ENCODE measurements at regions of chr4 and their contacts with region 1.

Region 1: DNA sequence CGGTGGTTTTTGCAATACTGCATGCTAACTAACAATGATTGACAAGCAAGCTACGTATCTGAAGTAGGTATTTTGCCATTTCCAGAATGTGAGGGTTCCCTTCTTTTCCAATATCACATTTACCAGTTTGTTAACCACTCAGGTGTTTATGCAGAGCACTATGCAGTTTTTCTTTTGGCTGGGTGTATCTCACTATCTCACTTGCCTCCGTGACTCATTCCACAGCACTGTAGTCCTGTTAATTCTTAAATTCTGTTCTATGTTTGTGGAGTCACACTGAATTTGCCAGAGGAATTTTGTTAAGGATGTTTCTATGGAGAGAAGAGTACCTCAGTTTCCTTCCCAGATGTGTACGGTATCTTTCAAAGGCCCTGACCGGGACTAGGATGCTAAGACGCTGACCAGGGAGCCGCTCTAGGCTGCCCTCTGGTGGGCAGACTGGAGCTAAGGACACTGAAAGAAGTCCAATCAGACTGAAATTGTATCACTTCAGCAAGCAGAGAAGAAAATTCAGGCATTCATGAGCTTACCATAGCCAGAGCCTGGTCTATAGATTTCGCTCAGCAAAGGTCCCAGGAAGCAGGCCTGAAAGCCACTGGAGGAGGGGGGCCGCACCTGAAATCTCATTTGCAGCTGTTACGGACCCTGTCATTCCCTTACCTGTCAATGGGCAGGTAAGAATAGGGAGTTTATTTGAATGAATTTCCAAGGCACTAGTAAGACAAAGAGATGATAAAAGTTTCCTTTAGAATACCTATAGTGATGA is 388.4 kb upstream of the SPOCK3 start:
- DNase-seq: peak; percentile 69
- ATAC-seq: peak; percentile 67
- H3K4me3 ChIP-seq: no peak overlapping the region
- H3K27ac ChIP-seq: no peak overlapping the region
- H3K4me1 ChIP-seq: no peaks in the 10 kb centered on the region
- H3K27me3 ChIP-seq: no peaks in the 10 kb centered on the region
- CTCF ChIP-seq: peak; percentile 80

Region 2: DNA sequence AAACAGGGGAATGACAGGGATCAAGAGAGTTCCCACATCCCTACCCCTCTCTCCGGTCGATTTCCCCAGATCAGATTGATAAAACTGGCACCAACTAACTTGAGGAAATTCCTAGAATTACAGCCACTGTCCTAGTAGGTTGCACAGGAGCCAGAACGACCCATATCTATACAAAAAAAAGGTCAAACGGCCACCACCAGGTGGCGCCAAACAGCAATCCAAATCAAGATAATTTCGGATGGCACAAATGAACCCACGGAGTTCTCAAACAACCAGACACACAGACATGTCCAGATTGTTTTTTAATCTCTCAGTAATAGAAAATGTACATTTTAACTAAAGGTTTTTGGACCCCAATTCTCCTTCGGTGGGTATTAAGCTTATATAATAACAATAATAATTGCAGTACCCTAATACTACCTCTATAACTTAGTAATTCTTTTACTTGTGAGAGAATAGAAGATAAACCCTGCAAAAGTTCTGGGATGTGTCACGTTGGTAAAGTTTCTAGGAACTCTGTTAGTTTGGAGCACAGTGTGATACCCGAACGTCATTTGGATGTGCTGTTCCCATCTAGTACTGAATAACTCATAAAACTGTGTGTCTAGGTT is 601.0 kb before region 1 on chr4:
- CTCF ChIA-PET with region 1: no interaction called
- POLR2A ChIA-PET with region 1: no interaction called
- intact Hi-C with region 1: loop called (anchors 2 kb)
- DNase-seq: peak; percentile 74
- ATAC-seq: peak; percentile 63
- H3K4me3 ChIP-seq: no peak overlapping the region
- H3K27ac ChIP-seq: no peak overlapping the region
- H3K4me1 ChIP-seq: peaks cover 27% of the 10 kb centered on the region
- H3K27me3 ChIP-seq: no peaks in the 10 kb centered on the region
- CTCF ChIP-seq: peak; percentile 84

Region 3: GRCh38 chr4:167443841-167444240 is 178.8 kb before region 1 on chr4:
- CTCF ChIA-PET with region 1: no interaction called
- POLR2A ChIA-PET with region 1: no interaction called
- intact Hi-C with region 1: loop called (anchors 2 kb)
- DNase-seq: no peak
- ATAC-seq: no peak
- H3K4me3 ChIP-seq: no peak overlapping the region
- H3K27ac ChIP-seq: no peak overlapping the region
- H3K4me1 ChIP-seq: no peaks in the 10 kb centered on the region
- H3K27me3 ChIP-seq: no peaks in the 10 kb centered on the region
- CTCF ChIP-seq: no peak

Region 4: DNA sequence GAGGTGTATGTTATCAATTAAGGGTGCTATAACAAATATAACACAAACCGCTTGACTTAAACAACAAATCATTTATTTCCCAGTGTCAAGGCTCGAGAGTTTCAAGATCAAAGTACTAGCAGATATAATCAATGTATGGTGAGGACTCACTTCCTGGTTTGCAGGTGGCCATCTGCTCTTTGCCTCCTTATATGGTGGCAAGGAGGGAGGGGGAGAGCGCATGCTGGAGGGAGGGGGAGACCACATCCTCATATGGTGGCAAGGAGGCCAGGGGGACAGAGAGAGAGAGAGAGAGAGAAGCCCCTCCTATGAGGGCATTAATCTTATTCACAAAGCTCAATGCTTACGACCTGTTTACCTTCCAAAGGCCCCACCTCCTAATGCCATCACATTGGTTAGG is 16.1 kb before region 1 on chr4:
- CTCF ChIA-PET with region 1: no interaction called
- POLR2A ChIA-PET with region 1: no interaction called
- intact Hi-C with region 1: no loop called
- DNase-seq: no peak
- ATAC-seq: no peak
- H3K4me3 ChIP-seq: no peak overlapping the region
- H3K27ac ChIP-seq: no peak overlapping the region
- H3K4me1 ChIP-seq: no peaks in the 10 kb centered on the region
- H3K27me3 ChIP-seq: no peaks in the 10 kb centered on the region
- CTCF ChIP-seq: no peak

Region 5: DNA sequence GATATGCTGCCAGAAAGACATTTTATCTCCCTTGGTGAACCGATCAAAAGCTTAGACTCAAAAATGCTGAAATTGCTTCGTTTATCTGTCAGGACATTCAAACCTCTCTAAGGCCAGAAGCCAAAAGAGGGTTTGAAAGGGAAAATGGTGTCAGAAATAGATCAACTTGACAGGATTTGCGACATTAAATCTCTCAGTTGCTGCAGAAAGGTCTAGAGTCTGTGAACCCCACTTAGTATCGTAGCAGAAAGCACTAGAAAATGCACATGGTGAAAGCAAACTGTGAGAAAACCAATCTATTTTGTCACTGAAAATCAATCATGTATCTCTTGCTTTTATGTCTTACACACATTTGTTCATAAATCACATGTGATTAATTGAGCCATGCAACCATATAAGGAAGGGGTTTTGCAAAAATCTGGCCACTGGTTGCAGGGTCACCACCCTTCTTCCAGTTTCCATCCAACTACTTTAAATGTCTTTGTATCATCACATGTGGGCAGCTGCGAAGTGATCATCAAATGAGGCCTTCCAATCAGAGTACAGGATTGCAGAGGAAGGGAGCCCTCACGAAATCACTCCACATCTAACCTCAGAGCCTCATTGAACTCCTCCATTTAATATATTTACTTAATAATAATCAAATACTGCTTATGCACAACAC is 122.5 kb after region 1 on chr4:
- CTCF ChIA-PET with region 1: no interaction called
- POLR2A ChIA-PET with region 1: no interaction called
- intact Hi-C with region 1: no loop called
- DNase-seq: no peak
- ATAC-seq: no peak
- H3K4me3 ChIP-seq: no peak overlapping the region
- H3K27ac ChIP-seq: no peak overlapping the region
- H3K4me1 ChIP-seq: no peaks in the 10 kb centered on the region
- H3K27me3 ChIP-seq: no peaks in the 10 kb centered on the region
- CTCF ChIP-seq: no peak

Region 6: GRCh38 chr4:167989815-167990214 is 367.2 kb after region 1 on chr4:
- CTCF ChIA-PET with region 1: no interaction called
- POLR2A ChIA-PET with region 1: no interaction called
- intact Hi-C with region 1: loop called (anchors 10 kb)
- DNase-seq: peak; percentile 48
- ATAC-seq: peak; percentile 68
- H3K4me3 ChIP-seq: no peak overlapping the region
- H3K27ac ChIP-seq: no peak overlapping the region
- H3K4me1 ChIP-seq: no peaks in the 10 kb centered on the region
- H3K27me3 ChIP-seq: no peaks in the 10 kb centered on the region
- CTCF ChIP-seq: peak; percentile 54

Region 7: GRCh38 chr4:168076989-168077725 is 454.5 kb after region 1 on chr4:
- CTCF ChIA-PET with region 1: no interaction called
- POLR2A ChIA-PET with region 1: no interaction called
- intact Hi-C with region 1: loop called (anchors 5 kb)
- DNase-seq: peak; percentile 85
- ATAC-seq: peak; percentile 76
- H3K4me3 ChIP-seq: no peak overlapping the region
- H3K27ac ChIP-seq: peak overlapping the region; percentile 75
- H3K4me1 ChIP-seq: peaks cover 16% of the 10 kb centered on the region
- H3K27me3 ChIP-seq: no peaks in the 10 kb centered on the region
- CTCF ChIP-seq: peak; percentile 86

Region 8: DNA sequence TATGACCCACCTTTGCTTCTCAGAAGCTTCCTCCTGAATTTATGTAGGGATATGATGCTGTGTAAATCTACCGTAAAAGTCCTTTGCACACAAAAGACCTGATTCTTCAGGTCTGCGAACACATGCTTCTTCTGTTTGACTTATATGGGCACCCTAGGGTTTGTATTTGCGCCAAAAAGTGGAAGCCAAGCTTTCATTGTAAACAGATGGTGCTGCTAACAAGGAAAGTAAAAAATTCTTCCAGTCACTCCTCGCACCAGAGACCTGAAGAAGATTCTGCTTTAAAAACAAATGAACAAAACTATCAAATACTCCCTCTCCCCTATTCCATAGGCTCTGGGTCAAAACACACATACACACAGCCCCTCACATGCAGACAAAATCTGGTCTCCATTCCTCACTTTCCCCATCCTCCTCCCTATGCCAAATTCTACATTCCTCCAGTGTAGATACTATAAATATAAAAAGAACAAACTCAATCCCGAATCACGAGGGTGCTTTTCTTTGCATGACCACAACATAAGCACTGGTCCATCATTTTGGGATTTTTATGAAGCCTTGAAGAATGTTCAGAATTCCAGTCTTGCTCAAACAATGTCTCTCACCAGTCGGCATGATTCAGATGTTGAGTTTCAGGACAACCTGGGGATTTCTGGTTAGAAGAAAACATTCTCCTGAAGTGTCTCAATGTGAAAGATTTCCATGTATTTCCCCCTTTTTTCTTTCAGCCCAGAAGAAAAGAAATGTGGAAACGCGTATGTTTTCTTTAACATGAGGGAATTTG is 999.3 kb after region 1 on chr4:
- CTCF ChIA-PET with region 1: no interaction called
- POLR2A ChIA-PET with region 1: no interaction called
- intact Hi-C with region 1: no loop called
- DNase-seq: no peak
- ATAC-seq: no peak
- H3K4me3 ChIP-seq: no peak overlapping the region
- H3K27ac ChIP-seq: no peak overlapping the region
- H3K4me1 ChIP-seq: peaks cover 20% of the 10 kb centered on the region
- H3K27me3 ChIP-seq: no peaks in the 10 kb centered on the region
- CTCF ChIP-seq: no peak

Measured in PC-3 (cell line).